Cardiac septum (tissue), 1 donor: ENCODE measurements at regions of chr4 and their contacts with region 1.

Region 1: GRCh38 chr4:55321707-55322264 is 24.3 kb upstream of the SRD5A3 start:
- DNase-seq: no peak

Region 2: DNA sequence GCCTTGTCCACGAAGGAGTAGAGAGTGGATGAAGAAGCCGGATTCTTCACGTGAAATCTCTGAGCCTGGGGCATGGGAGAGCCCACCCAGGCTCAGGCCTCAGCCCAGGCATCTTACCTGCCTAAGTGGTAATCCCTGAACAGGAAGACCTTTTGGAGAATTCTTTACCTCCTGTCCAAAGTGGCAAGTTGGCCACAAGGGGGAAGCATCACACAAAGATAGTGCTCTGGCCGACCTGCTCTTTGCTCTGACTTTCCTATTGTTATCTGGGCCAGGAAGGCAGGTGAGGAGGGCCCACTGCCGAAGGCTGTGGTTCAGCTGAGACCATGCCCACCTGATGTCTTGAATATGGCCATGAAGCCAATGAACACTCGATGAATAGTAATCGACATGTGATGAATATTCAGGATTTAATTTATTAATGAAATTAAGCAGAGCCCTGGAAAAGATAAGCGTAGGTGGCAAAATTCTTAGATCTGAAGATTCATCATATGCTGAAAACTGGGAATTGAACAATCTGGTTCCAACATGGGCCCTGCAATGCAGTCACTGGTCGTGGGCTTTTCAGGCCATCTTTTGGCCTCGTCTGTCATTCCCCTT is 998.9 kb before region 1 on chr4:
- intact Hi-C with region 1: loop called (anchors 10 kb)
- DNase-seq: no peak

Region 3: GRCh38 chr4:54971474-54971950 is 350.3 kb before region 1 on chr4:
- intact Hi-C with region 1: loop called (anchors 1 kb)
- DNase-seq: no peak

Region 4: GRCh38 chr4:54999003-54999402 is 322.8 kb before region 1 on chr4:
- intact Hi-C with region 1: loop called (anchors 1 kb)
- DNase-seq: no peak

Region 5: DNA sequence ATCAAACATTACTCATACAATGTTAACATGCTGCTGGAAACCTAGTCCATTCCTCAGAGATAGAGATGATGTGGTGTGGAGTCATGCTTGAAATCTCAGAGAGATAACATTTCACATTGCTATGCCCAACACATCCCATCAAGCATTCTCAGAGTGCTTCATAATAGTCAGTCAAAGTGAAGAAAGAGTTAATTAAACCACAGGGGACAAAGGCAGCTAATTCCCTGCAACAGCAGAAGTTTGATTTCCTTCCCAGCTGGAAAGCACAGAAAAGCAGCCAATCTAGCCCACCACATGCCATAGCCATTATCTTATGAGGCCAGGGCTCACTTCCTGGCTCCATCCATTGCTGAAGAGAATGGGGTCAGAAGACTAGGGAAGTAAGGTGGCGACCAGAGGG is 205.3 kb before region 1 on chr4:
- intact Hi-C with region 1: loop called (anchors 5 kb)
- DNase-seq: no peak

Region 6: GRCh38 chr4:55184600-55185523 is 136.9 kb before region 1 on chr4:
- intact Hi-C with region 1: loop called (anchors 5 kb)
- DNase-seq: no peak